ENCODE measurements at regions of chr1 and their contacts with region 1.

Region 1: GRCh38 chr1:156860113-156860627 is 495 bp upstream of the NTRK1 start:
- DNase-seq: peak; percentile 63
- H3K4me3 ChIP-seq: peak overlapping the region; percentile 55
- H3K27ac ChIP-seq: no peak overlapping the region
- H3K4me1 ChIP-seq: peaks cover 10% of the 10 kb centered on the region
- H3K27me3 ChIP-seq: peaks cover 27% of the 10 kb centered on the region
- CTCF ChIP-seq: peak; percentile 94

Region 2: DNA sequence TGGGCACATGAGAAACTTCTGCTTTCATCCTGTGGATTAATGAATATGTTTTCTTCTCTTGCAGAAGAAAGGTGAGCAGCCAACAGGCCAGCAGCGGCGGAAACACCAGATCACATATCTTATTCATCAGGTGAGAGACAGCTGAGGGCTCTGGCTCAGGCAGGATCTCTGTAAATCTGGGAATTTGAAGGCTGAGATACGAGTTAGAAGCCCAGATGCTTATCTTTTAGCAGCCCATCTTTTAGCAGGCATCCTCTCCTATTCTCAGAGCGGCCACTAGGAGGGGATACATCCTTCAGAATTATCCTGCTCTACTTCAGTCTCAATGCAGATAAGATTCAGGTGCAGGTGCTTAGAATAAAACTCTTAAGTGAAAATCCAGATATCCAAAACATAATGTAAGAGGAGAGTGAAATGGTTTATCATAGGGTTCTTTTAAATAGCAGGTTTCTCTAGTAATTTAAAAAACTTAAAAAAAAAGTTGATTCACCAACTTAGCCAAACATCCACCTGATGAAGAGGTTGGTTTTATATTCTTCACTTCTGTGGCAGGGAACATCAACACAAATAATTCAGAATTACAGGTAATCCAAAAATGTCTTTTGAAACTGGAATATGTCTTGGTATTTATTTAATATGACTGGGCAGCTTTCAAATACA is 62.8 kb before region 1 on chr1:
- CTCF ChIA-PET with region 1: interaction called, 13 read pairs
- POLR2A ChIA-PET with region 1: no interaction called
- intact Hi-C with region 1: loop called (anchors 2 kb)
- DNase-seq: peak; percentile 70
- H3K4me3 ChIP-seq: no peak overlapping the region
- H3K27ac ChIP-seq: no peak overlapping the region
- H3K4me1 ChIP-seq: peaks cover 24% of the 10 kb centered on the region
- H3K27me3 ChIP-seq: no peaks in the 10 kb centered on the region
- CTCF ChIP-seq: peak; percentile 90

Region 3: GRCh38 chr1:156838981-156839410 is 21.2 kb before region 1 on chr1:
- CTCF ChIA-PET with region 1: interaction called, 14 read pairs
- POLR2A ChIA-PET with region 1: no interaction called
- intact Hi-C with region 1: no loop called
- DNase-seq: peak; percentile 51
- H3K4me3 ChIP-seq: no peak overlapping the region
- H3K27ac ChIP-seq: no peak overlapping the region
- H3K4me1 ChIP-seq: no peaks in the 10 kb centered on the region
- H3K27me3 ChIP-seq: no peaks in the 10 kb centered on the region
- CTCF ChIP-seq: peak; percentile 96

Region 4: GRCh38 chr1:157147906-157148717 is 287.9 kb after region 1 on chr1:
- CTCF ChIA-PET with region 1: no interaction called
- POLR2A ChIA-PET with region 1: no interaction called
- intact Hi-C with region 1: no loop called
- DNase-seq: peak; percentile 94
- H3K4me3 ChIP-seq: no peak overlapping the region
- H3K27ac ChIP-seq: peak overlapping the region; percentile 92
- H3K4me1 ChIP-seq: peaks cover 71% of the 10 kb centered on the region
- H3K27me3 ChIP-seq: no peaks in the 10 kb centered on the region
- CTCF ChIP-seq: no peak

Measured in A673 (cell line).